PC-9 (cell line): ENCODE measurements at regions of chr17 and their contacts with region 1.

Region 1: DNA sequence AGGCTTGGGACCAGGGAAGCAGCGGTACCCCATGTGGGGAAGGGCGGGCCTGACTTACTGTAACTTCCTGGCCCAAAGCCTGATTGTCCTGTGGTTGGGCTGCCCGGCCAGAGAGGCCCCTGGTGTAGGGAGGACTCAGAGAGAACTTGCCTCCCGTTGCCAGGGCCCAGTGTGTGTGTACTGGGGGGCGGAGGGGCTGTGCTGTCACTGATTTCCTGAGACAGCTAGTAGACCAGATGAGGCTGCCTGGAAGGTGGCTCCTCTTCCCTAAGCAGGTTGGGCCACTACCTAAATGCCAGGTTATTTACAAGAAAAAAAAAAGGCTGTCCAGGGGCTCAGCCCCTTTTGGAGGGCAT is 16.7 kb downstream of the SOCS3 start:
- DNase-seq: peak in 1 of 2 experiments; percentile 62
- H3K4me3 ChIP-seq: peak overlapping the region; percentile 60; the same call in 1 of the 2 replicates
- H3K27ac ChIP-seq: peak overlapping the region; percentile 92
- H3K4me1 ChIP-seq: peaks cover 68% of the 10 kb centered on the region
- H3K27me3 ChIP-seq: no peaks in the 10 kb centered on the region
- CTCF ChIP-seq: no peak

Region 2: GRCh38 chr17:78324391-78325075 is 18.6 kb before region 1 on chr17:
- CTCF ChIA-PET with region 1: no interaction called
- POLR2A ChIA-PET with region 1: interaction called, 15 read pairs
- intact Hi-C with region 1: no loop called
- DNase-seq: no peak
- H3K4me3 ChIP-seq: no peak overlapping the region
- H3K27ac ChIP-seq: no peak overlapping the region
- H3K4me1 ChIP-seq: peaks cover 16% of the 10 kb centered on the region
- H3K27me3 ChIP-seq: no peaks in the 10 kb centered on the region
- CTCF ChIP-seq: no peak

Region 3: DNA sequence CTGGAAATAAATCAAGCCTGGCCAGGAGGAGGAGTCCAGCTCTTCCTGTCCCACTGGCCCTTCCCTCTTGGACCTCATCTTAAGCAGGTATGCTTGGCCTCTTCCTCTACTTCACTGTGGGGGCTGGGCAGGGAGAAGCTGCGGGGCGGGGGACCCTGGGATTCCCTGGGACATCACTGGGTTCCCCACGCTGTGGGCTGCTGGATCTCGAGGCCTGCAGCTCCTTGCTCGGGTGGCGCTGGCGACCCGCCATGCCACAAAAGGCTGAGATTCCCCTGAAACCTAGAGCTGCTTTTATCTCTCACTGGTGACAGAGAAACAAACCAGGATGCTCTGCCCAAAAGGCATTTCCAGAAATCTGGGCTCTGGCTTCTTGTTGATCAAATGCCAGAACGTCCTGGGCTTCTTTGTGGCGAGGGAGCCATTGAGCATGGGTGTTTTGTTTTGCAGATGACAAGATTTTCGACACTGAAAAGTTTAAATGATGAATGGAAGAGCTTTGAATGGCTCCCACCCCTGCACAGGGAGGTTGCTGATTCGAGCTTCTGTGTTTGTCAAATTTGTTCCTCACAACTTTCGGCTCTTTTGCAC is 26.7 kb after region 1 on chr17:
- CTCF ChIA-PET with region 1: interaction called, 18 read pairs
- POLR2A ChIA-PET with region 1: no interaction called
- intact Hi-C with region 1: no loop called
- DNase-seq: no peak
- H3K4me3 ChIP-seq: no peak overlapping the region
- H3K27ac ChIP-seq: no peak overlapping the region
- H3K4me1 ChIP-seq: peaks cover 14% of the 10 kb centered on the region
- H3K27me3 ChIP-seq: no peaks in the 10 kb centered on the region
- CTCF ChIP-seq: no peak